Ovary (tissue), 10 donors: ENCODE measurements at regions of chr7 and their contacts with region 1.

Region 1: DNA sequence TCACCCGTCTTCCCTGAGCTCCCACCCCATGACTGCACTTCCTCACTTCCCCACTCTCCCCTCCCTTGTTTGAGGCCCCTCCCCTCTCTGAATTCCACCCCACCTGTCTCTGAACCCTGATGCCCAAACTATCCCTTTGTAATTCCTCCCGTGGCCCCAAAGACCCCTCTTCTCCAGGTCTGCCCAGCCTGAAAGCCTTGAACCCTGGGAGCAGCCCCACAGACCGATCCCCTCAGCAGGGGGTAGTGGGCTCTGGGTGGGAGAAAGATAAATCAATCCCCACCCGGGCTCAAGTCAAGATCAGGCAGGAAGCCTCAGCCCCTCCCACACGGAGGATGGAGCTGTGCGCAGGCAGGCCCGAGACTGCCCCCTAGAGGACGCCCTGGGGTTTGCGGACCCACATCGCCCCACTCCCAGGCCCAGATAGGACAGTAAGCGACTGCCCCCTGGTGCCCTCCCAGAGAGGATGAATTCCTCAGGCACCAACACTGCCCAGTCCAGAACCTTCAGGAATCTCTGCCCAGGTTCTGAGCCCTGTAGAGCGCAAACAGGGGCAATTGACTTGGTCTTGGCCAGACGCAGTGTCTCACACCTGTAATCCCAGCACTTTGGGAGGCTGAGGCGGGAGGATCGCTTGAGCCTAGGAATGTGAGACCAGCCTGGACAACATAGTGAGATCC is 11.7 kb downstream of the HSPB1 start:
- DNase-seq: peak; percentile 94 to 98 (median 97)
- H3K4me3 ChIP-seq: no peak overlapping the region
- H3K27ac ChIP-seq: no peak overlapping the region
- H3K4me1 ChIP-seq: no peaks in the 10 kb centered on the region
- H3K27me3 ChIP-seq: no peaks in the 10 kb centered on the region
- CTCF ChIP-seq: peak; percentile 99 to 100 (median 100)
- EP300 ChIP-seq: no peak
- POLR2A ChIP-seq: peak; percentile 54

Region 2: GRCh38 chr7:76166404-76167255 is 147.6 kb before region 1 on chr7:
- intact Hi-C with region 1: loop called in 2 of 4 experiments (anchors 10 kb)
- DNase-seq: peak; percentile 99
- H3K4me3 ChIP-seq: peak overlapping the region; percentile 57
- H3K27ac ChIP-seq: peak overlapping the region; percentile 67 to 85
- H3K4me1 ChIP-seq: no peaks in the 10 kb centered on the region
- H3K27me3 ChIP-seq: no peaks in the 10 kb centered on the region
- CTCF ChIP-seq: peak in 2 of 3 donors; percentile 41 to 54
- EP300 ChIP-seq: peak; percentile 86
- POLR2A ChIP-seq: peak; percentile 94

Region 3: GRCh38 chr7:76179686-76180085 is 134.5 kb before region 1 on chr7:
- intact Hi-C with region 1: loop called in 2 of 4 experiments (anchors 2 to 10 kb)
- DNase-seq: no peak
- H3K4me3 ChIP-seq: no peak overlapping the region
- H3K27ac ChIP-seq: no peak overlapping the region
- H3K4me1 ChIP-seq: no peaks in the 10 kb centered on the region
- H3K27me3 ChIP-seq: no peaks in the 10 kb centered on the region
- CTCF ChIP-seq: no peak
- EP300 ChIP-seq: no peak
- POLR2A ChIP-seq: no peak

Region 4: DNA sequence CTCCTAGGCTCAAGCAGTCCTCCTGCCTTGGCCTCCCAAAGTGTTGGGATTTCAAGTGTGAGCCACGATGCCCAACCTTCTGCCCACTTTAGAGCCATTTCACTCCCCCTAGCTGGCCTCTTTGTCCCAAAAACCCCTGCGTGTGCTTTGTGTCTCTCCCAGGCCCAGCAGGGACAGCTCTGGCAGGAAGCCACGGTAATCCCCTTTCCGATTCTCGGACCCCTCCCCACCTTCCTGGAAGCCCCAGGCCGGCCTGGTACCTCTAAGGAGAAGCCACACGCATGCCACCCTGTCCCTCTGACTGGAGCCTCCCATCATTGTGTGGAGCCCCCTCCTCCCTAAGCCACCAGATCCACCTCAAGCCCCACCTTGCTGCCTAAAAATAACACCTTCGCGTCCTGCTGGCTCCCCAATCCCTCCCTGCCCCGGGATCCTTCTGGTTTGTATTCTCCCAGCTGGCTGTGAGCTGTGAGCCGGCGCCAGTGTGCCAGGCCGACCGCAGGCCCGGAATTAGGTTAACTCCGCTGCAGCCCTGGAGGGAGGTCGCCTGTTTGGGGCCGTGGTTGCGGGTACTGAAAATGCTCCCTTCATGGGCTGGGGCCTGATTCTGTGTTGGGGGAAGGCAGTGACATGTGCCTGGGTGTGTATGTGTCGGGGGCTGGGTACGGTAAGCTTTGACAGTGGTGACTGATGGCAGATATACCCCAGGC is 128.8 kb before region 1 on chr7:
- intact Hi-C with region 1: loop called in 1 of 4 experiments (anchors 5 kb)
- DNase-seq: no peak
- H3K4me3 ChIP-seq: no peak overlapping the region
- H3K27ac ChIP-seq: no peak overlapping the region
- H3K4me1 ChIP-seq: no peaks in the 10 kb centered on the region
- H3K27me3 ChIP-seq: no peaks in the 10 kb centered on the region
- CTCF ChIP-seq: no peak
- EP300 ChIP-seq: no peak
- POLR2A ChIP-seq: no peak

Region 5: GRCh38 chr7:76291343-76292212 is 22.6 kb before region 1 on chr7:
- intact Hi-C with region 1: loop called in 2 of 4 experiments (anchors 1 to 2 kb)
- DNase-seq: peak; percentile 89 to 95 (median 93)
- H3K4me3 ChIP-seq: peak overlapping the region; percentile 25
- H3K27ac ChIP-seq: peak overlapping the region; percentile 87 to 99
- H3K4me1 ChIP-seq: peaks cover 8% of the 10 kb centered on the region
- H3K27me3 ChIP-seq: no peaks in the 10 kb centered on the region
- CTCF ChIP-seq: peak; percentile 98 to 99 (median 98)
- EP300 ChIP-seq: no peak
- POLR2A ChIP-seq: peak; percentile 23

Region 6: DNA sequence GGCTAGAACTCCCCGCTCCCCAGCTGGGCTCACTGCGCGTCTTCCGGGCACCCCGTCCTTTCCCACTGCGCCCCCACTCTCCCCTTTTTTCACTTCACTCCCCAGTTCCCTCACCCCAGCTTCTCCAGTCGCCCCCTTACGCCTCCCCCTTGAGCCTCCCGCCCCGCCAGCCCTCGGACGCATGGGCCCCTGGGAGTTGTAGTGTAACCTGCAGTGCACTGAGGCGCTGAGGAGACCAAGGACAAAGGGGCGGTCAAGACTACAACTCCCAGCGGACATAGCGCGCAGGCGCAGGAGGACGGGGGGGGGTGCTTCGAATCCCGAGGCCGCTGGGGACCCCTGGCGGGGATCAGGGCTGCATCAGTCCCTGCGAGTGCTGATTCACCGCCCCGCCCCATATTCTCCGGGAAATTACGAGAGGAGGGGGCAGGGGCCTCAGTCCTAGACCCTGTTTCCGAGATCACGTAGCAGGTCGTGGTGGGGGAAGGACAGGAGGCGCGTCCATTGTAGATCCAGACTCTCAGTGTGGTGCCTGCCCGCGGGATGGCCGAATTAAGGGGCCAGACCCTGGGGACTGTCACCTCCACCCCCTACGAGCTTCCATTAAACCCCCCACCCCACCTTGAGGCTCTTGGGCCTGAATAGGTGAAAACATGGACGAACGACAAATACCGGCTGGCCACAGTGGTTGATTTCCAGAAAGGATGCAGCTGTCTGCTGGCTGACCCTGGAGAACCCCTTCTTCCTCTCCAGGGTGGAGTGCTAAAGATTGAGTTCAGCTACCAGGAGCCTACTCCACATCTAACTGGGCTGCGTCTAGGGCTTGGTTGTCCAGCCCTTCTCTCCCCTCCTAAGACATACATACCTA is 45.2 kb after region 1 on chr7:
- intact Hi-C with region 1: loop called in 2 of 4 experiments (anchors 2 to 5 kb)
- DNase-seq: peak; percentile 94 to 99 (median 97)
- H3K4me3 ChIP-seq: peak overlapping the region; percentile 99
- H3K27ac ChIP-seq: peak overlapping the region; percentile 95 to 97
- H3K4me1 ChIP-seq: peaks cover 6% of the 10 kb centered on the region
- H3K27me3 ChIP-seq: no peaks in the 10 kb centered on the region
- CTCF ChIP-seq: peak; percentile 69 to 96 (median 94)
- EP300 ChIP-seq: peak; percentile 90
- POLR2A ChIP-seq: peak; percentile 36